Right lobe of liver (tissue), 6 donors: ENCODE measurements at regions of chr1 and their contacts with region 1.

Region 1: GRCh38 chr1:183915625-183916510 is 110.9 kb downstream of the RGL1 start:
- DNase-seq: peak in 2 of 3 donors; percentile 46 to 74
- ATAC-seq: peak; percentile 87 to 93 (median 90)
- H3K4me3 ChIP-seq: no peak overlapping the region
- H3K27ac ChIP-seq: no peak overlapping the region
- H3K4me1 ChIP-seq: peaks cover 0 to 5% (median 0%) of the 10 kb centered on the region in 4 donors
- H3K27me3 ChIP-seq: no peaks in the 10 kb centered on the region
- CTCF ChIP-seq: peak; percentile 81 to 92 (median 83)
- POLR2A ChIP-seq: no peak

Region 2: GRCh38 chr1:183655562-183656075 is 260.2 kb before region 1 on chr1:
- intact Hi-C with region 1: loop called in 1 of 2 experiments (anchors 10 kb)
- DNase-seq: peak; percentile 65 to 72 (median 66)
- ATAC-seq: peak; percentile 97 to 99 (median 98)
- H3K4me3 ChIP-seq: no peak overlapping the region
- H3K27ac ChIP-seq: no peak overlapping the region
- H3K4me1 ChIP-seq: peaks cover 0 to 5% (median 0%) of the 10 kb centered on the region in 4 donors
- H3K27me3 ChIP-seq: no peaks in the 10 kb centered on the region
- CTCF ChIP-seq: peak; percentile 86 to 94 (median 89)
- POLR2A ChIP-seq: no peak

Region 3: DNA sequence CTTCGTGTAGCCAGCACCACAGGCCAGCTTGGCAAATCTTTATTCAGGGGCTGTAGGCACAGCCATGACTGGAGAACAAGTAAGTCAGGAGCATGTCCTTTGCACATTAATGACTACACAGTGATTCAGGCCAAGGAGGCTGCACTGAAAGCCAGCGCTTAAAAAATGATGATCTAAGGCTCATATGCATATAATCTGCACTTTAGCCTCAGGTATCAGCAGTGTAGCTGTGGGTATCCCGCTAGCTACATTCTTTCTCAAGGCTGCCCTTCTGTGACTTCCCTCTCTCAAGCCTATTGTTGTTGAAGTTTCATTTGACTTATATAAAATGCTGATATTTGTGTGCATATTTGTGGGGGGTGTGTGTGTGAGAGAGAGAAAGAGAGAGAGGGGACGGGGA is 173.5 kb before region 1 on chr1:
- intact Hi-C with region 1: no loop called
- DNase-seq: no peak
- ATAC-seq: no peak
- H3K4me3 ChIP-seq: no peak overlapping the region
- H3K27ac ChIP-seq: no peak overlapping the region
- H3K4me1 ChIP-seq: no peaks in the 10 kb centered on the region
- H3K27me3 ChIP-seq: no peaks in the 10 kb centered on the region
- CTCF ChIP-seq: no peak
- POLR2A ChIP-seq: no peak